Activated CD8-positive, alpha-beta T cell treated with anti-CD3 and anti-CD28 coated beads for 36 hours (primary cell): ENCODE measurements at regions of chr1 and their contacts with region 1.

Region 1: GRCh38 chr1:155193275-155193990 is 14.3 kb downstream of the THBS3 start:
- DNase-seq: peak; percentile 84
- ATAC-seq: peak; percentile 62
- H3K4me3 Mint-ChIP-seq: peak overlapping the region; percentile 90
- H3K27ac Mint-ChIP-seq: peak overlapping the region; percentile 99
- H3K4me1 Mint-ChIP-seq: peaks cover 28% of the 10 kb centered on the region
- H3K27me3 Mint-ChIP-seq: no peaks in the 10 kb centered on the region
- CTCF ChIP-seq: peak; percentile 98

Region 2: GRCh38 chr1:155135415-155136028 is 57.9 kb before region 1 on chr1 and contains the start of gene SLC50A1:
- CTCF ChIA-PET with region 1: interaction called, 18 read pairs
- POLR2A ChIA-PET with region 1: interaction called, 3 read pairs
- intact Hi-C with region 1: no loop called
- DNase-seq: peak; percentile 96
- ATAC-seq: peak; percentile 80
- H3K4me3 Mint-ChIP-seq: peak within 1 kb of the TSS; percentile 99
- H3K27ac Mint-ChIP-seq: peak within 1 kb of the TSS; percentile 99
- H3K4me1 Mint-ChIP-seq: peaks cover 33% of the 10 kb centered on the region
- H3K27me3 Mint-ChIP-seq: no peaks in the 10 kb centered on the region
- CTCF ChIP-seq: no peak
- total RNA-seq, gene SLC50A1: 59.7 to 64.0 TPM

Region 3: GRCh38 chr1:155208541-155209311 is 15.3 kb after region 1 on chr1 and contains the start of gene MTX1:
- CTCF ChIA-PET with region 1: interaction called, 61 read pairs
- POLR2A ChIA-PET with region 1: interaction called, 52 read pairs
- intact Hi-C with region 1: no loop called
- DNase-seq: peak; percentile 94
- ATAC-seq: peak; percentile 86
- H3K4me3 Mint-ChIP-seq: peak within 1 kb of the TSS; percentile 92
- H3K27ac Mint-ChIP-seq: peak within 1 kb of the TSS; percentile 89
- H3K4me1 Mint-ChIP-seq: peaks cover 29% of the 10 kb centered on the region
- H3K27me3 Mint-ChIP-seq: no peaks in the 10 kb centered on the region
- CTCF ChIP-seq: no peak
- total RNA-seq, gene MTX1: 59.2 to 61.0 TPM

Region 4: GRCh38 chr1:155227261-155228095 is 34.0 kb after region 1 on chr1:
- CTCF ChIA-PET with region 1: interaction called, 13 read pairs
- POLR2A ChIA-PET with region 1: interaction called, 19 read pairs
- intact Hi-C with region 1: no loop called
- DNase-seq: peak; percentile 100
- ATAC-seq: peak; percentile 98
- H3K4me3 Mint-ChIP-seq: peak overlapping the region; percentile 91
- H3K27ac Mint-ChIP-seq: peak overlapping the region; percentile 99
- H3K4me1 Mint-ChIP-seq: peaks cover 37% of the 10 kb centered on the region
- H3K27me3 Mint-ChIP-seq: no peaks in the 10 kb centered on the region
- CTCF ChIP-seq: no peak

Region 5: DNA sequence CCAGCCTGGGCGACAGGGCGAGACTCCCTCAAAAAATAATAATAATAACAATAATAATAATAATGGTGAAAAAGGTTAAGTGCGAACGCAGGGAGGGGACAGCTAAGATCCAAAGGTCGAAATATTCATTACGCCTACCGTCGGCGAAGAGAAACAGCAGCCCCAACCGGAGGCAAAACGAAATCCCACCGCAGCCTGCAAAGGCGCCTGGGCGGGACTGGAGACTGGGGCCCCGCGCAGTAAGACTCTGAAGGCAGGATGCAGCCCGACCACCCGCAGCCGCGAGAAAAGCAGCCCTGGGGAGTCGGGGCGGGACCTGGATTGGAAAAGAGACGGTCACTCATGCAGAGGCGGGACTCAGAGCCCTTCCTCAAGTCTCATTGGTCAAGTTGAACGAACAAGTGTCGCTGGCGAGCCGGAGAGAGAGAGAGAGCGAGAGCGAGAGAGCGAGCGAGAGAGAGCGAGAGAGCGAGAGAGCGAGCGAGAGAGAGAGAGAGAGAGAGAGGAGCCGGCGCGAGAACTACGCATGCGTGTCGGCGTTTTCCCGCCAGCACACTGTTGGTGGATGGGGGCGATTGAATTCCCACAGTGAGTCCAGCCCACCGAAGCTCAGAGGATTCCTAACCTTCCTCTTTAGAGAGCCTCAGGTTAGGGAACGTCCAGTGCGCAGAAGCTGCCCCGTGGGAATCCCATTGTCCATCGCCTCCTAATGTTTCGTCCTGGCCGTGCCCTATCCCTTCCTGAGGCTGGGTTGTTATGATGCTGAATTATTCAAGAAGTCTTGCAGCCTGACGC is 51.1 kb after region 1 on chr1:
- CTCF ChIA-PET with region 1: interaction called, 13 read pairs
- POLR2A ChIA-PET with region 1: interaction called, 11 read pairs
- intact Hi-C with region 1: no loop called
- DNase-seq: peak; percentile 100
- ATAC-seq: peak; percentile 97
- H3K4me3 Mint-ChIP-seq: peak overlapping the region; percentile 71
- H3K27ac Mint-ChIP-seq: peak overlapping the region; percentile 95
- H3K4me1 Mint-ChIP-seq: peaks cover 41% of the 10 kb centered on the region
- H3K27me3 Mint-ChIP-seq: peaks cover 2% of the 10 kb centered on the region
- CTCF ChIP-seq: peak; percentile 39

Region 6: DNA sequence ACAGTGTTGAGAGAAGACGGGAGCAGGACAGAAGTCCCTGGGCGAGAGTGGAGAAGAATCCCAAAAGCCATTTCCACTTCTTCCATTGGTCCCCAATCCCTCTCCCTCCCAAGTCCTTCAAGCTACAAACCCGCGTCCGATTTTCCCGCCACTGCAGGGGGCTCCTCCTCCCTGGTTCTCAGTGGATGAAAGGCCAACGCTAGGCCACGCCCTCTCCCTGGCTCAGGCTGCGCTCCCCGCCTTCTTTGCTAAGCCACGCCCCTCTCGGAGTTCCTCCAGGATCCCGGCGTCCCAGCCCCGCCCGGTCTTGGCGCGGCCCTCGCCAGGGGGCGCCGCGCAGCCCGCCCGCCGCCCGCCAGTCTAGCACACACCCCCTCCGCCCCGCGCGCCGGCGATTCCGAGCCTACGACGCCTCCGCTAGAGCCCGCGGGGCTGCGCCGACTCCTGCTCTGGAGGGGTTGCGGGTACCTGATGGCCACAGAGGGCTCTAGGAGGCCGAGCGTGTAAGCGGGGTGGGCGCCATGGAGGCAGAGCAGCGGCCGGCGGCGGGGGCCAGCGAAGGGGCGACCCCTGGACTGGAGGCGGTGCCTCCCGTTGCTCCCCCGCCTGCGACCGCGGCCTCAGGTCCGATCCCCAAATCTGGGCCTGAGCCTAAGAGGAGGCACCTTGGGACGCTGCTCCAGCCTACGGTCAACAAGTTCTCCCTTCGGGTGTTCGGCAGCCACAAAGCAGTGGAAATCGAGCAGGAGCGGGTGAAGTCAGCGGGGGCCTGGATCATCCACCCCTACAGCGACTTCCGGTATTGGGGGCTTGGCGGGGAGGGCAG is 83.8 kb after region 1 on chr1 and contains the start of gene HCN3:
- CTCF ChIA-PET with region 1: no interaction called
- POLR2A ChIA-PET with region 1: no interaction called
- intact Hi-C with region 1: no loop called
- DNase-seq: peak; percentile 96
- ATAC-seq: peak; percentile 72
- H3K4me3 Mint-ChIP-seq: peak within 1 kb of the TSS; percentile 54
- H3K27ac Mint-ChIP-seq: no peak within 1 kb of the TSS
- H3K4me1 Mint-ChIP-seq: peaks cover 29% of the 10 kb centered on the region
- H3K27me3 Mint-ChIP-seq: no peaks in the 10 kb centered on the region
- CTCF ChIP-seq: peak; percentile 73
- total RNA-seq, gene HCN3: 1.5 TPM